ENCODE measurements at regions of chr3 and their contacts with region 1.

Region 1: GRCh38 chr3:112814266-112814665 is 32.4 kb downstream of the CD200R1L start:
- DNase-seq: no peak
- ATAC-seq: peak; percentile 38 to 48

Region 2: DNA sequence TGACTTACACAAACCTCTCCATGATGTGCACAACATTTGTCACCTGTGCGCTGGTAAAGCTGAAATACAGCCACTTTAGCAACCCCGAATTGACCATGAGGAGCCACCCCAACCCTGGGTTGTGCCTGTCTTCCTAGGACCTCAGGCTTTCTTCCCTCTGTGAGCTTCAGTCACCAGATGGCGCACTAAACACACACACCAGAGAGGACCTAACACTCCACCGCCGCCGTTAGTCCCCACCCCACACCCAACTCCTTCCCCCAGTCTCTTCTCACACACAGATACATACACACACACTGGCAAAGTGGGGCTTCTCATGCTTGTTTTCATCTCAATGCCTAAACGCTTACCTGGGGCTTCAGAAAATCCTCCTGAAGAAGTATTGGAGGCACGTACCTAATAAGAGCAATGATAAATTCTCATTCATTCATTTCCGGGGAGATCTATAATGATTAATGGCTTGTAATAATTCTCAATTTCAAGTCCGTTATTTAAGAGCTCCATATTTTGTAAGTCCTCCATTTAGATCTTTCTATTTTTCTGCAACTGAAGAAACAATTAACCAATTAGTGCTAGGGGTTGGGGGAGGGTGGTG is 171.3 kb before region 1 on chr3:
- intact Hi-C with region 1: loop called (anchors 5 to 10 kb)
- DNase-seq: peak; percentile 87
- ATAC-seq: peak; percentile 83 to 86

Region 3: DNA sequence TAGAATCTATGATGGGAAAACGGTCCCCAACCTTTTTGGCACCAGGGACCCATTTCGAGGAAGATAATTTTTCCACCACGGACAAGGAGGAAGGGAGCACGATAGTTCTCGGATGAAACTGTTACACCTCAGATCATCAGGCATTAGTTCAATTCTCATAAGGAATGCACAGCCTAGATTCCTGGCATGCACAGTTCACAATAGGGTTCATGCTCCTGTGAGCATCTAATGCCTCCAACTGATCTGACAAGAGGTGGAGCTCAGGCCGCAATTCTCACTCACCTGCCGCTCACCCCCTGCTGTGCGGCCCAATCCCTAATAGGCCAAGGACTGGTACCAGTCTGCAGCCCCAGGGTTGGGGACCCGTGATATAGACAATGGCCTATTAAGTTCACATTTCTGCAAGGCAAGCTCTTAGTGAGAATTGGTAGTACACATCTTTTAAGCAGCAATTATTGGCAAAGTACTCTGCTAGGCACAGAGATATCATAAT is 134.1 kb after region 1 on chr3:
- intact Hi-C with region 1: no loop called
- DNase-seq: no peak
- ATAC-seq: no peak

Measured in left cardiac atrium (tissue), 4 donors.